Adrenal gland (tissue), 19 donors: ENCODE measurements at regions of chr15 and their contacts with region 1.

Region 1: GRCh38 chr15:63599401-63600000 is 2.3 kb downstream of the FBXL22 start:
- DNase-seq: peak; percentile 77 to 88 (median 81)
- H3K4me3 ChIP-seq: peak overlapping the region in 3 of 4 donors; percentile 13 to 86 (median 78)
- H3K27ac ChIP-seq: peak overlapping the region in 4 of 5 donors; percentile 89 to 99 (median 92)
- H3K4me1 ChIP-seq: peaks cover 9 to 19% of the 10 kb centered on the region in 2 donors
- H3K27me3 ChIP-seq: no peaks in the 10 kb centered on the region
- CTCF ChIP-seq: peak; percentile 66 to 85 (median 79)
- POLR2A ChIP-seq: peak in 1 of 2 donors; percentile 51

Region 2: GRCh38 chr15:63473999-63474809 is 125.3 kb before region 1 on chr15:
- intact Hi-C with region 1: loop called in 1 of 2 experiments (anchors 5 kb)
- DNase-seq: peak in 1 of 7 donors; percentile 34
- H3K4me3 ChIP-seq: no peak overlapping the region
- H3K27ac ChIP-seq: peak overlapping the region in 2 of 5 donors; percentile 24 to 26
- H3K4me1 ChIP-seq: peaks cover 0 to 14% of the 10 kb centered on the region in 2 donors
- H3K27me3 ChIP-seq: no peaks in the 10 kb centered on the region
- CTCF ChIP-seq: no peak
- POLR2A ChIP-seq: no peak

Region 3: DNA sequence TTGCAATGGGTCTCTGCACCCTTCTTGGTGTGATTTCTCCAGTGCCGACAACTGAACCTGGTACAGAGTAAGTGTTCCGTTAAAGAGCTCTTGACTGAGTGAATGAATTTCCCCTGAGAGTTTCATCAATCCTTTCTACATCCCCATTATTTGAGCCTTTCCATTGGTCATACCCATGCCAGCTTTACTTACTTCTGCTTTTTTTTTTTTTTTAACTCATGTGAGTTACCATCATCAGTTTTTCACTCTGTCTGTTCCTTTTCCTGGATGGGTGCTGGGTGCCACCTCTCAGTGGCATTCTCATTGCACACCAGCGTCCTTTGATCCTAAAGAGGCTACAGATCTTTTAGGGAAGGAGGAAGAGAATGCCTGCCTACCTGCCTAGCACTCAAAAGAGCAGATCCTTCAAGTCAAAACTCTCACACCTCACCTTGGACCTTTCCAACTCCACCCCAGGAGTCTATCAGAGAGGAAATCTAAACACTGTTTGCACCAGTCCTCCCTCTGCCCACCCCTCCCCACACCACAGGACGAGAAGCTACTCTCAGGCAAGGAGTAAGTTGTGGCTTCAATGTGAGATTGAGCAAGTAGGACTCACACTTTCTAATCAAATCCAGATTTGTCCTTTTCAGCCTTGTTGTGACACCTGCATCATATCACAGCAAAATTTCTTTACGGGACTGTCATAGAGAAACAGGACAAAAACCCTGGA is 108.2 kb before region 1 on chr15:
- intact Hi-C with region 1: loop called (anchors 5 kb)
- DNase-seq: no peak
- H3K4me3 ChIP-seq: no peak overlapping the region
- H3K27ac ChIP-seq: peak overlapping the region in 1 of 5 donors; percentile 84
- H3K4me1 ChIP-seq: peaks cover 0 to 3% of the 10 kb centered on the region in 2 donors
- H3K27me3 ChIP-seq: no peaks in the 10 kb centered on the region
- CTCF ChIP-seq: no peak
- POLR2A ChIP-seq: no peak

Region 4: GRCh38 chr15:63677730-63678129 is 78.2 kb after region 1 on chr15:
- intact Hi-C with region 1: no loop called
- DNase-seq: peak; percentile 20 to 62 (median 24)
- H3K4me3 ChIP-seq: no peak overlapping the region
- H3K27ac ChIP-seq: peak overlapping the region in 1 of 5 donors; percentile 7
- H3K4me1 ChIP-seq: no peaks in the 10 kb centered on the region
- H3K27me3 ChIP-seq: no peaks in the 10 kb centered on the region
- CTCF ChIP-seq: no peak
- POLR2A ChIP-seq: no peak